Heart left ventricle (tissue), 16 donors: ENCODE measurements at regions of chr5 and their contacts with region 1.

Region 1: DNA sequence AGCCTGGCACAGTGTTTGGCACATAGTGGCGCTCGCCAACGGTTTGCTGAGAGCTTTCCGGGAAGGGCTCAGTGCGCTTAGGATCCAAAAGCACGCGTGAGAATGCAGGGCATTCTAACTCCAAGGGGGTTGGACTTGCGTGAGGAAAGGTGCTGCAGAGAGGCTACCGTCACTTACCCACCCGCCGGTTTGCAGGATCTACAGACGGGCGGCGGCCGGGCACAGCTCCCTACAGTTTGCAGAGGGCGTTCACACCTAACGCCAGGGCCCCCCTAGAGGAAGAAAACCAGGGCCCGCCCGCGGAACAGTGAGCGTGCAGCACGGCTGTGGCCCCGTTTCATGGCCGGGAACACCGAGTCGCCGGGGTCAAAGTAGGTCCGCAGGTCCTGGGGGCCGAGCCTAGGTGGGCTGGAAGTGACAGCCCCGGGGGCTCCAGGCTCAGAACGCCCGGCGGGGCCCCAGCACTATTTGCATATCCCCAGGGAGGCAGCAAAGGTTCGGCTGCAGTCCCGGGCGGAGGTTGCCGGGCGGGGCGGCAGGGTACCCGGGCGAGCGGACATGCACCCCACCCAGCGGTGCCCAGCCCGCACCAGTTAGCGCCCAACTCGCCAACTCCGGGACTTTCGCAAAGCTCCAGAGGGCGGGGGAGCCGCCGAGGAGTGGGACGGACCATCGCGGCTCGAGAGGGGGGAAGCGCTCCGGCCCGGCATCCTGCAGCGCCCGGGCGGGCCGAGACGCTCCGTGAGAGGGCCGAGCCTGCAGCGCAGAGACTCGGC is 526 bp upstream of the GALNT10 start:
- DNase-seq: peak; percentile 87 to 94 (median 90)
- ATAC-seq: peak; percentile 75 to 95 (median 91)
- H3K4me3 ChIP-seq: peak overlapping the region; percentile 62 to 99 (median 95)
- H3K27ac ChIP-seq: peak overlapping the region; percentile 36 to 92 (median 86)
- H3K4me1 ChIP-seq: peaks cover 0 to 47% (median 24%) of the 10 kb centered on the region in 12 donors
- H3K27me3 ChIP-seq: no peaks in the 10 kb centered on the region
- CTCF ChIP-seq: peak in 10 of 12 donors; percentile 9 to 65 (median 43)
- POLR2A ChIP-seq: peak in 1 of 2 donors; percentile 52

Region 2: DNA sequence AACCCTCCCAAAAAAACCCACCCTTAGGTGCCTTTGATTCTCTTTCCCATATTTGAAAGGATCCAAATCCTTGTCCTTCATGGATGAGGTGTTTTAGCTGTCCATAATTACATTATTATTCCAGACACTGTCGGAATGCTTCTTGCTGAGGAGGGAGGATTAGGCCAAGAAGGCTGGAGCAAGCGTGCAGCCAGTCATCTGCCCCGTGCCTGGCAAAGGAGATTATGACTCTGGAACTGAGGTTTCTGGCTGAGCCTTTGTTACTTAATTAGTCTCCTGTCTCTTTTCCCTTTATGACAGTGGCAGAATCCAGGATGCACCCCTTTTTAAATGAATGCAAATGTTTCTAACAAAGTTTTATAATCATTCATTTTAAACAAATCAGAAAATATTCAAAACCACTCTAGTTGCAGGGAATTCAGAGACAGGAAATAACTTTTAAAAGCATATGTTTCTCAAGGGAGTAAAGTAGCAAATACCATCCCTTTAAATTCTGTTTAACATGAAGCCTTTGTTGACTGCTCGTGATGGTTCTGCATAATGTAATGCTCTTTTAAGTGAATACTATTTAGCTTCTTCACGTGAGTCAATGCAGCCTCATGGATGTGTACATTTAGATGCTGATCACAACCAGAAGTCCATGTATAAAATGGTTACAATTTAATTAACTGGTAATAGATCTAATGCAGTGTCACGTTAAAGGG is 70.4 kb after region 1 on chr5:
- intact Hi-C with region 1: loop called in 1 of 10 experiments (anchors 10 kb)
- DNase-seq: no peak
- ATAC-seq: peak in 2 of 4 donors; percentile 32 to 46
- H3K4me3 ChIP-seq: no peak overlapping the region
- H3K27ac ChIP-seq: peak overlapping the region in 1 of 12 donors; percentile 16
- H3K4me1 ChIP-seq: peaks cover 0 to 29% (median 15%) of the 10 kb centered on the region in 12 donors
- H3K27me3 ChIP-seq: no peaks in the 10 kb centered on the region
- CTCF ChIP-seq: no peak
- POLR2A ChIP-seq: no peak

Region 3: DNA sequence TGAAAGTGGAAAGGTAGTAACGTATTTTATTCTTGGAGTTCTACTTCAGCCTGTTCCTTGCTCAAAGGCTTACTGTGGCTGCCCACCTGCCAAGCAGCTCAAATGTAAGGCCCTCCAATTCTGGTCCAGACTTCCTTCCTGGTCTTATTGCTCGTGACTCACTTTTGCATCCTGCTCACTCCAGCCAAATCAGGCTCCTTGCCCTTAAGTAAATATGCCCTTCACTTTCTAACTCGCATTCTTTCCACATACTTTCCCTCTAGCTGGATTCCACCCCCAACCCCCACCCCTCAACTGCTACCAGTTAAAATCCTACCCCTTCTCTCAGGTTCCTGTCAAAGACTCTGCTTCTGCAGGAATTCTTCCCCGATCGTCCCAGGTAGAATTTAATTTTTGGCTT is 97.1 kb after region 1 on chr5:
- intact Hi-C with region 1: loop called in 1 of 10 experiments (anchors 5 kb)
- DNase-seq: peak in 1 of 5 donors; percentile 27
- ATAC-seq: peak; percentile 28 to 81 (median 68)
- H3K4me3 ChIP-seq: no peak overlapping the region
- H3K27ac ChIP-seq: peak overlapping the region in 8 of 12 donors; percentile 23 to 70 (median 52)
- H3K4me1 ChIP-seq: peaks cover 0 to 38% (median 24%) of the 10 kb centered on the region in 12 donors
- H3K27me3 ChIP-seq: no peaks in the 10 kb centered on the region
- CTCF ChIP-seq: no peak
- POLR2A ChIP-seq: no peak

Region 4: DNA sequence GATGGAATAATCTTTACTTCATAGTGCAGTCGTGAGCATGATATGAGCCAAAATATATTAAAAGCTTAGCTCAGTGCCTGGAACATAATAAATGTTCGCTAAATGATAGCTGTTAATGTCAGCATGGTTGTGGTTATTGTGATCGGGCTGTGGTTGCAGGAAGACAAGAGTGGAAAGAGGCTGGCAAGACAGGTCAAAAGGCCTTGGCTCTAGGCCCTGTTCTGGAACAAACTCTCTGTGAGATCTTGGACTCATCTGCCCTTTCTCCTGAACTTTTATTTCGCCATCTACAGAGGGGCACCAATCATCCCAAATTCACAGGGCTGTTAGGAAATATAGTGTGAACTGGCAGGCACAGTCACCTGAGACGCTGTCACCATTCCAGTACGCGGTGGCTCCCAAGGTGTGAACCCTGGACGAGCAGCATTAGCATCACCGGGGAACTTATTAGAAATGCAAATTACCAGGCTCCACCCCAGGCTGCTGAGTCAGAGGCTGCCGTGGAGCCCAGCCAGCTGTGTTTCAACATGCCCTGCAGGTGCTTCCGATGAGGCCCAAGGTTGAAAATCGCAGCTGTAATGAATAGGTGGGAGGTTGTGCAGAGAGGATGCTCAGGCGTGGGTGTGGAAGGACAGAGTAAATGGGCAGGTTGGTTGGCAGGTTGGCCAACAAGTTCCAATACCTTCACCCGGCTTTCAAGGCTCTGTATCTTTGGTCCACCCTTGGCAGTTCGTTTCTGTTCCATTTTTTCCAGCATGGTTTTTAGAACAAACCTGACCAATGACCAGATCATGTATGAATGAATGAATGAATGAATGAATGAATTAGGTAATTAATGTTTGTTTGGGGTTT is 205.6 kb after region 1 on chr5:
- intact Hi-C with region 1: loop called in 3 of 10 experiments (anchors 5 kb)
- DNase-seq: peak in 1 of 5 donors; percentile 40
- ATAC-seq: peak in 2 of 4 donors; percentile 9 to 36
- H3K4me3 ChIP-seq: no peak overlapping the region
- H3K27ac ChIP-seq: no peak overlapping the region
- H3K4me1 ChIP-seq: peaks cover 0 to 7% (median 0%) of the 10 kb centered on the region in 12 donors
- H3K27me3 ChIP-seq: no peaks in the 10 kb centered on the region
- CTCF ChIP-seq: no peak
- POLR2A ChIP-seq: no peak

Region 5: GRCh38 chr5:154405078-154405792 is 215.2 kb after region 1 on chr5:
- intact Hi-C with region 1: loop called in 5 of 10 experiments (anchors 2 to 5 kb)
- DNase-seq: peak; percentile 81 to 89 (median 82)
- ATAC-seq: peak; percentile 88 to 99 (median 97)
- H3K4me3 ChIP-seq: peak overlapping the region in 11 of 12 donors; percentile 3 to 62 (median 45)
- H3K27ac ChIP-seq: peak overlapping the region in 1 of 12 donors; percentile 60
- H3K4me1 ChIP-seq: peaks cover 0 to 13% (median 8%) of the 10 kb centered on the region in 12 donors
- H3K27me3 ChIP-seq: no peaks in the 10 kb centered on the region
- CTCF ChIP-seq: peak; percentile 76 to 96 (median 92)
- POLR2A ChIP-seq: no peak

Region 6: DNA sequence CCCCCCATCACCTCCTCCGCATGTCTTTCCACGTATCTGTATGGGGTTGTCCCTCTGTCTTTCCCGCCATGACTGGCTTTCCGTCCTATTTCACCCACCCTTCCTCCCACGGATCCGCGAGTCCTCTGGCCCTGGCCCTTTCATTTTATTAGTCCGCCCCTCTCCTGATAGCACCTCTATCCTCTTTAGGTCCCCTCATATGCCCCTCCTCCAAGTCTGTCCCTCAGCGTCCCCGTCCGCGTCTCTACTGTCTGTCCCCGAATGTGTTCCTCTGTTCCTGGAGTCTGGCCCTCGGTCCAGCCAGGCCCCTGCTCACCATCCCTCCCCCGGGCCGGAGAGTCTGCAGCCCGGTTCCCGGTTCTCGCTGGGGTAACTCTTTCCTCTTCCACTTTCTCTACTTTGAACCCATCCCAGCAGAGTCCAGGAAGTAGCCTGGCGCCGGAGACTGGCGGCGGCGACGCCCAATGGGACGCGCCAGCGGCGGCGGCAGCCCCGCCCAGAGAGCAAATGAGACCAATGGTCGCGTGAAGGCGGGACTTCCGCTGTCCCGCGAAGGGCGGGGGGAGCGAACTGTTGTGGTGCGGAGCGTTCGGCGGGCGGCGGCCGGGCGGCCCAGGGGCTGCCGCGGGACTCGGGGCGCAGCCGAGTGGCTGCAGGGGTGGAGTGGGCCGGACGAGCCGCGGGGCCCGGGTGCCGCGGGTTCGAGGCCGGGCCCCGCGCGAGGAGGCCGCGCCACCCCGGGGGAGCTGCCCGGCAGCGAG is 255.6 kb after region 1 on chr5 and contains the start of gene SAP30L:
- intact Hi-C with region 1: loop called in 1 of 10 experiments (anchors 1 kb)
- DNase-seq: peak; percentile 95 to 98 (median 96)
- ATAC-seq: peak; percentile 97 to 99 (median 98)
- H3K4me3 ChIP-seq: peak within 1 kb of the TSS; percentile 87 to 99 (median 96)
- H3K27ac ChIP-seq: peak within 1 kb of the TSS; percentile 58 to 95 (median 85)
- H3K4me1 ChIP-seq: peaks cover 0 to 52% (median 34%) of the 10 kb centered on the region in 12 donors
- H3K27me3 ChIP-seq: no peaks in the 10 kb centered on the region
- CTCF ChIP-seq: no peak
- POLR2A ChIP-seq: peak; percentile 91 to 97
- total RNA-seq, gene SAP30L: 26.1 to 55.5 (median 38.6) TPM